Cardiac septum (tissue), 1 donor: ENCODE measurements at regions of chr3 and their contacts with region 1.

Region 1: GRCh38 chr3:98692787-98693473 is 70.2 kb upstream of the ST3GAL6 start:
- DNase-seq: no peak

Region 2: GRCh38 chr3:98784666-98785600 is 92.0 kb after region 1 on chr3:
- intact Hi-C with region 1: loop called (anchors 5 kb)
- DNase-seq: no peak